PC-3 (cell line): ENCODE measurements at regions of chr4 and their contacts with region 1.

Region 1: DNA sequence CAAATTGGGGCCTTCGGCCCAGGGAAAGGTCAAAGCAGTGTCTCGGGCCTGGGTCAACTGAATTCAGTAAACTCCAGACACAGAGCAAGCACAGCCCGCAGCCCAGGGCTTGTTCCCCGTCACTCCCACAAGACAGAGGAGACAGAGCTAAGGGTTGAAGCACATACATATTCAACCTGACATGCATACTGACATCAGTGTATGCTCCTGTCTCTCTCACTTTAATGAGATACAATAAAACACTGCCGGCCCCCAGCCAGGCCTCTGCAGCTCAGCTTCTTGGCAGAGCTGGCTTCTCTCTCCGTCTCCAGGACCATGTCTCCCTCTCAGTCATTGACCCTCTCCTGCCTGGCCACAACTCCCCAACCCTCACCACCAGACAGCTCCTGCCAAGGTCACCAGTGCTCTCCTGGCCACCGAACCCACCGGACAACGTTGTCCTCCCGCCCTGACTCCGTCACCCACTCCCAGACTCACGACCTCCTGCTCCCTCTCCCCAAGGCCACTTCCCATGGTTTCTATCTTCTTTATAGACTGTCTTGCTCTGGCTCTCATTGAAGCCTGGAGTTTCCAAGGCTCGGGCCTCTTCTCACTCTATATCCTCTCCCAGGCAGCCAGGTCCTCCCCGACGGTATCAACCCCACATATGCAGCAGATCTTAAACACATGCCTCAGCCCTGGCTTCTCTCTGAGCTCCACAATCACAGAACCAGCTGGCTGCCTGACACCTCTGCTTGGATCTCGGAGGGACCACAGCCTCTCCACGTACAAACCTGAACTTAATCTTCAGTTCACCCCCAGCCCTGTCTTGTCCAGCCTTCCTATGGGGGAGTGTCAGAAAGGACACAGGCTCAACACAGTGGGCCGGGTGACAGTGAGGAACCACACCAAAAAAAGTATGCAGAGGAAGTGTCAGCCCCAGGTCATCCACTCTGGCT is 67.7 kb upstream of the C4orf50 start:
- DNase-seq: no peak
- ATAC-seq: no peak
- H3K4me3 ChIP-seq: no peak overlapping the region
- H3K27ac ChIP-seq: no peak overlapping the region
- H3K4me1 ChIP-seq: no peaks in the 10 kb centered on the region
- H3K27me3 ChIP-seq: no peaks in the 10 kb centered on the region
- CTCF ChIP-seq: no peak

Region 2: GRCh38 chr4:5970776-5971431 is 115.1 kb before region 1 on chr4:
- CTCF ChIA-PET with region 1: no interaction called
- POLR2A ChIA-PET with region 1: no interaction called
- intact Hi-C with region 1: no loop called
- DNase-seq: no peak
- ATAC-seq: no peak
- H3K4me3 ChIP-seq: no peak overlapping the region
- H3K27ac ChIP-seq: no peak overlapping the region
- H3K4me1 ChIP-seq: no peaks in the 10 kb centered on the region
- H3K27me3 ChIP-seq: peaks cover 8% of the 10 kb centered on the region
- CTCF ChIP-seq: no peak

Region 3: DNA sequence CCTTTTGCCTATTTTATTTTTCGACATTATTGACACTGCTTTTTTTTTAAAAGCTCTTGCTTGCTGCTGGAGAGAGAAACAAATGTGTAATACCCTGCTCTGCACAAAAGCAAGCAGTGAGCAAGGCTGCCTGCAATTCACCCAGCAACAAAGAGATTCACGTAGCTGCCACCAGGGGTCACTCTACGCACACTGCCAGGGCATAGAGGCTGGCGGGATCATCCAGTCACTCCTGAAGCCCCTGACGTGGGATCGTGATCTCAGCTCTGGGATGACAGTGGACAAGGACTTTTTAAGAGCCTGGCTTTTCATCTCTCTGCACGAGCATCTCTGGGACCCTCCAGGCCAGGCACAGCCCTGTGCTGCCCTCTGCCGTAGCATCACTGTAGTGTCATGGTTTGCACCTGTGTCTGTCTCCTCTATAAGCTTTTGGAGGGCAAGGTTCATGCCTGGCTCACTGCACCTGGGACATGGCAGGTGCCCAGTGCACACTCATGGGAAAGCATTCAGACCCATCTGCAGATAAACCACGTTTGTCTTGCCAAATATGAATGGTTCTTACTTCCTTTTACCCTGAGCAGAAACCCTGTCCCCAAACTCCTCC is 87.5 kb before region 1 on chr4:
- CTCF ChIA-PET with region 1: no interaction called
- POLR2A ChIA-PET with region 1: no interaction called
- intact Hi-C with region 1: no loop called
- DNase-seq: peak; percentile 59
- ATAC-seq: peak; percentile 89
- H3K4me3 ChIP-seq: no peak overlapping the region
- H3K27ac ChIP-seq: no peak overlapping the region
- H3K4me1 ChIP-seq: no peaks in the 10 kb centered on the region
- H3K27me3 ChIP-seq: peaks cover 24% of the 10 kb centered on the region
- CTCF ChIP-seq: peak; percentile 93

Region 4: GRCh38 chr4:6109842-6110719 is 24.1 kb after region 1 on chr4:
- CTCF ChIA-PET with region 1: no interaction called
- POLR2A ChIA-PET with region 1: interaction called, 28 read pairs
- intact Hi-C with region 1: no loop called
- DNase-seq: peak; percentile 59
- ATAC-seq: peak; percentile 61
- H3K4me3 ChIP-seq: no peak overlapping the region
- H3K27ac ChIP-seq: no peak overlapping the region
- H3K4me1 ChIP-seq: no peaks in the 10 kb centered on the region
- H3K27me3 ChIP-seq: no peaks in the 10 kb centered on the region; the same call in 1 of the 2 replicates
- CTCF ChIP-seq: peak; percentile 46

Region 5: DNA sequence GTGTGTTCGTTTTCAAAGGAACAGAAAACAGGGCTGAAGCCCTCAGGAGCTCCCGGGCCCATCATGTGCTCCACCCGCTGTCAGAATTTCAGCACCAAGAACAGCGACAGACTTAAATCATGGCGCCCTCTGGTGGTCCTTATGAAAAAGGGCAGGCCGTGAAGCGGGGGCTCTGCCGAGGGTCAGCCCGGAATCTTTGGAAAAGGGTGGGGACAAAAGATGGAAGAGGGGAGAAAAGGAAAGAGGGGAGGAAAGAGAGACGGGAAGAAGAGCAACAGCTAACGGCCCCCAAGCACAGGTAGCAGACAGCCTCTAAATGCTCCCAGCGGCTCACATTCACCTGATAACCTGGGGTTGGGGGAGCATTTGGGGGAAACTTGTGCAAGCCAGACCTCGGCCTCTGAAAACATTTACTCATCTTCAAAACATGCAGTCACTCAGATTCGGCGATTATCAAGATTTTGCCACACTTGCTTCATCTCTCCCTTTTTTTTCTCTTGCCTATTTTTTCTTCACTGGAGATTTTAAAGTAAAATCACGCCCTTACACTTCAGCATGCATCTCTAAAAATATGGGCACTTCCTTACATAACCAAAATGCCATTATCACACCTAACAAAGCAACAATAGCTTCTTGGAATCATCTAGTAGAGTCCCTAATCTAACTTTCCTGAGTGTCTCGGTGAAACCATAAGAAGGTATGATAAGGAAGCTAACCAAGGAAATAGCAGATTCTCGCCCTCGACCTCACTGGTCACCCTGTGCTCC is 460.9 kb after region 1 on chr4:
- CTCF ChIA-PET with region 1: no interaction called
- POLR2A ChIA-PET with region 1: no interaction called
- intact Hi-C with region 1: no loop called
- DNase-seq: peak; percentile 66
- ATAC-seq: no peak
- H3K4me3 ChIP-seq: no peak overlapping the region
- H3K27ac ChIP-seq: no peak overlapping the region
- H3K4me1 ChIP-seq: no peaks in the 10 kb centered on the region
- H3K27me3 ChIP-seq: no peaks in the 10 kb centered on the region
- CTCF ChIP-seq: peak; percentile 91